Ascending aorta (tissue), 2 donors: ENCODE measurements at regions of chr5 and their contacts with region 1.

Region 1: DNA sequence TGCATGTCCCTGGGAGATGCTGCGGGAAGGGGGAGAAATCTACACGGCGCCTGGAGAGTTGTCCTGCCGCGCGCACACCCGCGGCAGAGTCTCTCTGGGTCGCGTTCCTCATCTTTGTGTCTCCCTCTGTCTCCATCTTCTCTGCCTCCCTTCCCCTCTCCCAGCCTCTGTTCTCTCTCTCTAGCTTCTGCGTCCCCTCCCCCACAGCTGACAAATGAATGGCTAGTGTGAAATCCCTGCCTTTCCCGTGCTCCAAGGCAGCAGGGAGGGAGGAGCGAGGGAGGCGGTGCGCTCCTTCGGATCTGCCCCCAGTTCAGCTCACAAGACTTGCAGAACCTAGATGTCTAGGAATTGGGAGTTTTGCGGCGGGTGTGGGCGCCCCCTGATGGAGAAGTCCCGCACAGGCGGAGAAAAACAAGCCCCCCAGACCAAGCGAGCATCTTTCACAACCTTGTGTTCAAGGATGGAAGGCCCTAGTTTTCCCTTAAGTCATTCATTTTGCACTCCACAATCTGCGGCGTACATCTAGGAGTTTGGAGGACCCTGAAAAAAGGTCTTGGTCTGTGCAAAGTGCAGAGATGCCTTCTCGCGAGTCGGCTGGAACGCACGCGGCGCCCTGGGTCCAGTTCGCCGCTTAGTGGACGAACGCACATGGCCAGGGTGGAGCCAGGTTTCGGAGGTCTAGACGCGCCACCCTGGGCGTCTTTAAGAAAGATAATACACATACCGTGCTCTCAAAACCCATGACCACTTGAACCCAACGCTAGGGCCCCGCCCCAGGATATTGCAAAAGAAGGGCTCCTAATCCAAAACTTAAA is 2.0 kb downstream of the VCAN start:
- DNase-seq: peak; percentile 93 to 99
- H3K4me3 ChIP-seq: peak overlapping the region; percentile 70 to 78
- H3K27ac ChIP-seq: peak overlapping the region; percentile 93
- H3K4me1 ChIP-seq: peaks cover 0 to 18% of the 10 kb centered on the region in 2 donors
- H3K27me3 ChIP-seq: no peaks in the 10 kb centered on the region
- CTCF ChIP-seq: peak; percentile 85 to 91 (median 91)

Region 2: GRCh38 chr5:81751009-81751835 is 1722.3 kb before region 1 on chr5 and contains the start of gene SSBP2:
- intact Hi-C with region 1: loop called (anchors 10 kb)
- DNase-seq: peak; percentile 97 to 100
- H3K4me3 ChIP-seq: peak within 1 kb of the TSS; percentile 86 to 94
- H3K27ac ChIP-seq: peak within 1 kb of the TSS; percentile 98 to 100
- H3K4me1 ChIP-seq: peaks cover 8 to 38% of the 10 kb centered on the region in 2 donors
- H3K27me3 ChIP-seq: no peaks in the 10 kb centered on the region
- CTCF ChIP-seq: no peak
- total RNA-seq, gene SSBP2: 22.4 TPM

Region 3: DNA sequence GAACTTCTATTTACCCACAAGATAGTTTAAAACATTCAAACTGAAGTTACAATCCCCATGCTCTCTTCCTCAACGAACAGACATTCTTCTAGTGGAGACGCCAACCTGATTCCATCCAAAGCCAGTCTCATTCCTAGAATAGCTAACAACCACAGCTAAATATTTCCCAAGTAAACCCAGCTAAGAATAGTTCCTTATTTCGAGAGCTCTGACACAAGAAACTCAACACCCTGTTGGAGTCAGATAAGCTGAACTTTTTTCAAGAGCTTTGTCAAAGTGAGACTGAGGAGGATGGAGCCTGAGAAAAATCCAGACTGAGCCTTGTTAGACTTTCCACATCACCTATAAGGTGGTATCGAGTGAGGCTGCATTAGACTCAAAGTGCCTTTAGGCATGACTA is 1138.7 kb before region 1 on chr5:
- intact Hi-C with region 1: loop called (anchors 5 kb)
- DNase-seq: no peak
- H3K4me3 ChIP-seq: no peak overlapping the region
- H3K27ac ChIP-seq: peak overlapping the region; percentile 98 to 99
- H3K4me1 ChIP-seq: peaks cover 21 to 72% of the 10 kb centered on the region in 2 donors
- H3K27me3 ChIP-seq: no peaks in the 10 kb centered on the region
- CTCF ChIP-seq: no peak

Region 4: GRCh38 chr5:82538339-82539034 is 935.1 kb before region 1 on chr5:
- intact Hi-C with region 1: loop called (anchors 5 kb)
- DNase-seq: no peak
- H3K4me3 ChIP-seq: peak overlapping the region in 1 of 2 donors; percentile 3
- H3K27ac ChIP-seq: peak overlapping the region; percentile 51 to 52
- H3K4me1 ChIP-seq: peaks cover 3 to 12% of the 10 kb centered on the region in 2 donors
- H3K27me3 ChIP-seq: no peaks in the 10 kb centered on the region
- CTCF ChIP-seq: no peak

Region 5: GRCh38 chr5:83076742-83077661 is 396.6 kb before region 1 on chr5 and contains the starts of genes TMEM167A and XRCC4:
- intact Hi-C with region 1: loop called (anchors 1 kb)
- DNase-seq: peak; percentile 94 to 98
- H3K4me3 ChIP-seq: peak within 1 kb of the TSS; percentile 86 to 94
- H3K27ac ChIP-seq: peak within 1 kb of the TSS; percentile 89 to 90
- H3K4me1 ChIP-seq: peaks cover 0 to 17% of the 10 kb centered on the region in 2 donors
- H3K27me3 ChIP-seq: no peaks in the 10 kb centered on the region
- CTCF ChIP-seq: no peak
- total RNA-seq, gene TMEM167A: 38.3 TPM
- total RNA-seq, gene XRCC4: not detected

Region 6: GRCh38 chr5:83430130-83431010 is 43.2 kb before region 1 on chr5:
- intact Hi-C with region 1: loop called (anchors 2 kb)
- DNase-seq: peak in 1 of 2 donors; percentile 77
- H3K4me3 ChIP-seq: no peak overlapping the region
- H3K27ac ChIP-seq: no peak overlapping the region
- H3K4me1 ChIP-seq: peaks cover 0 to 3% of the 10 kb centered on the region in 2 donors
- H3K27me3 ChIP-seq: no peaks in the 10 kb centered on the region
- CTCF ChIP-seq: peak; percentile 54 to 84 (median 83)

Region 7: GRCh38 chr5:83551821-83552220 is 78.3 kb after region 1 on chr5:
- intact Hi-C with region 1: no loop called
- DNase-seq: no peak
- H3K4me3 ChIP-seq: no peak overlapping the region
- H3K27ac ChIP-seq: peak overlapping the region; percentile 75 to 82
- H3K4me1 ChIP-seq: peaks cover 0 to 36% of the 10 kb centered on the region in 2 donors
- H3K27me3 ChIP-seq: no peaks in the 10 kb centered on the region
- CTCF ChIP-seq: no peak